ENCODE measurements at regions of chr1 and their contacts with region 1.

Region 1: DNA sequence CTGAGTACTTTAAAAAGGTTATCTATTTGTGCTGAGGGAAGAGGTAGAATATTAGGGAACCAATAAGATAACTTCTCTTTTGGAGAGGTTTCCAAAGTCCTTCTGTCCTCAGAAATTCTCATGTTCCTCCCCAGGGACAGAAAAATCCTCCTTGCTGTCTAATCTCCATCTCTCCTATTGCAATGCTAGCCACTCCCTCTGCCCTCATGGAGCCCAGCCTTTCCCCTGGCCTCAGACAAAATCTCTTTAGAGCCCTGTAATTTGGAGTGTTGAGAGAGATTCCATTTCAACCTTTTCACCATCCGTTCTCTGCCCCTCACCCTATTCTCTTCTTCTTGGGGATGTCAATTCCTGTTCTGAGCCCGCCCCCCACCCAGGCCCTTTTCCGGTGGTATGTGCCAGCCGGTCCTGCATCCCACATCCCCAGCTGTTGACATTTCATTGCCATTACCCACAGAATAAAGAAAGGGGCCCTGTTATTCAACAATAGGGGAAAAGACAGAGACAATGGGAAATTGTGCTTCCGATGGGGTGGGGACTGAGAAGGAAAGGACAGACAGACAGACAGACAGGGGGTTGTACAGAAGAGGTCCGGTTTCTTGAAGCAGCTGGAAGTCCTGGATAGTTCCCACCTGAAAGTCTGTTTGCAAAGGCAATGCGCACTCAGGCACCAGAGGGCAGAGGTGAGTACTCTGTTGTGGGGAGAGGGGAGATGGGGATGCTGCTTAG is at the start of gene HAPLN2:
- DNase-seq: peak; percentile 57
- H3K4me3 Mint-ChIP-seq: no peak within 1 kb of the TSS
- H3K27ac Mint-ChIP-seq: no peak within 1 kb of the TSS
- H3K4me1 Mint-ChIP-seq: peaks cover 15% of the 10 kb centered on the region
- H3K27me3 Mint-ChIP-seq: peaks cover 54% of the 10 kb centered on the region
- CTCF ChIP-seq: peak; percentile 51
- total RNA-seq, gene HAPLN2: not detected in 2 replicates

Region 2: DNA sequence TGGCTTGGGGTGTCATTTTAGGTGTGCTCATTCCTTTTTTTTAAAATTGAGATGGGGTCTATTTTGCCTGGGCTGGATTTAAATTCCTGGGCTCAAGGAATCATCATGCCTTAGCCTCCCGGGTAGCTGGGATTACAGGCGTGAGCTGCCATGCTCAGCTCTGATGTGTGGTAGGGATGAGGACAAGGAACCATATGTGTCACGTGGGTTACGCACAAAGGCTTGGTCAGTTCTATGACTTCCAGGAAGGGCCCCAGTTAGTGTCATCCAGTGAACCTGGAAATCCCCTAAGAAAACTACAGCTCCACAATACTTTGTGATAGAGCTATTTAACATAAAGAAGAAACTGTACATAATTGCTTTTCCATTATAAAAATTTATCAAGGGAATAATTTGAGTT is 102.5 kb after region 1 on chr1:
- CTCF ChIA-PET with region 1: interaction called, 13 read pairs
- POLR2A ChIA-PET with region 1: interaction called, 5 read pairs
- intact Hi-C with region 1: no loop called
- DNase-seq: no peak
- H3K4me3 Mint-ChIP-seq: no peak overlapping the region
- H3K27ac Mint-ChIP-seq: peak overlapping the region; percentile 54
- H3K4me1 Mint-ChIP-seq: peaks cover 11% of the 10 kb centered on the region
- H3K27me3 Mint-ChIP-seq: no peaks in the 10 kb centered on the region
- CTCF ChIP-seq: no peak